ENCODE measurements at regions of chr10 and their contacts with region 1.

Region 1: GRCh38 chr10:102352066-102352715 is 43.3 kb upstream of the NFKB2 start:
- DNase-seq: peak in 6 of 10 donors; percentile 21 to 65 (median 43)
- H3K4me3 ChIP-seq: no peak overlapping the region
- H3K27ac ChIP-seq: no peak overlapping the region
- H3K27me3 ChIP-seq: no peaks in the 10 kb centered on the region
- CTCF ChIP-seq: peak; percentile 79 to 96 (median 91)

Region 2: DNA sequence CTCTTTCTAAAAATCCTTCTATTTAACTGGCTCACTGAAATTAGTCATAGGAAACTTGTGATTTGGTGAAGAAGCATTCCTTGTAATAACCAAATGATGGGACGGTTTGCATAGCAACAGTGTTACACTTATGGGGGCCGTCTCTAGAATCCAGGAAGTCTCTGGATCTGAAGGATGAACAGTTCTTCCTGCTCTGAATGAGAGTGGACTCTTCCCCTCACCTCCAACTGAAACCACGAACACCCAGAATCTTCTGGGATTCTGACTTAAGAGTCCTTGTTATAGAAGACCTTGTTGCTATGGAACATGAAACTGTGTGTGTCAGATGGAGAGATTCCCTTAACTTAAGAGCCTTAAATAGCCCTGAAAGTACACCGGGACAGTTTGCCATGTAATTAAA is 176.8 kb before region 1 on chr10:
- intact Hi-C with region 1: loop called in 1 of 2 experiments (anchors 10 kb)
- DNase-seq: no peak
- H3K4me3 ChIP-seq: peak overlapping the region in 3 of 59 donors; percentile 12 to 28 (median 21)
- H3K27ac ChIP-seq: peak overlapping the region in 2 of 59 donors; percentile 8 to 32
- H3K27me3 ChIP-seq: no peaks in the 10 kb centered on the region
- CTCF ChIP-seq: no peak

Region 3: GRCh38 chr10:102229810-102230263 is 122.4 kb before region 1 on chr10:
- intact Hi-C with region 1: loop called (anchors 2 kb)
- DNase-seq: peak; percentile 69 to 88 (median 80)
- H3K4me3 ChIP-seq: peak overlapping the region in 58 of 59 donors; percentile 12 to 62 (median 44)
- H3K27ac ChIP-seq: no peak overlapping the region
- H3K27me3 ChIP-seq: peaks cover 0 to 53% (median 28%) of the 10 kb centered on the region in 45 donors
- CTCF ChIP-seq: peak; percentile 60 to 98 (median 92)